Activated CD4-positive, alpha-beta memory T cell treated with anti-CD3 and anti-CD28 coated beads, Interleukin-2, amount 10 ng/mL, durations not matched to agents 7 days and 5 days (primary cell): ENCODE measurements at regions of chr3 and their contacts with region 1.

Region 1: GRCh38 chr3:36868614-36869436 is 76.0 kb downstream of the TRANK1 start:
- DNase-seq: peak; percentile 42
- H3K4me3 Mint-ChIP-seq: no peak overlapping the region
- H3K27ac Mint-ChIP-seq: no peak overlapping the region
- H3K4me1 Mint-ChIP-seq: peaks cover 17% of the 10 kb centered on the region
- H3K27me3 Mint-ChIP-seq: peaks cover 3% of the 10 kb centered on the region

Region 2: DNA sequence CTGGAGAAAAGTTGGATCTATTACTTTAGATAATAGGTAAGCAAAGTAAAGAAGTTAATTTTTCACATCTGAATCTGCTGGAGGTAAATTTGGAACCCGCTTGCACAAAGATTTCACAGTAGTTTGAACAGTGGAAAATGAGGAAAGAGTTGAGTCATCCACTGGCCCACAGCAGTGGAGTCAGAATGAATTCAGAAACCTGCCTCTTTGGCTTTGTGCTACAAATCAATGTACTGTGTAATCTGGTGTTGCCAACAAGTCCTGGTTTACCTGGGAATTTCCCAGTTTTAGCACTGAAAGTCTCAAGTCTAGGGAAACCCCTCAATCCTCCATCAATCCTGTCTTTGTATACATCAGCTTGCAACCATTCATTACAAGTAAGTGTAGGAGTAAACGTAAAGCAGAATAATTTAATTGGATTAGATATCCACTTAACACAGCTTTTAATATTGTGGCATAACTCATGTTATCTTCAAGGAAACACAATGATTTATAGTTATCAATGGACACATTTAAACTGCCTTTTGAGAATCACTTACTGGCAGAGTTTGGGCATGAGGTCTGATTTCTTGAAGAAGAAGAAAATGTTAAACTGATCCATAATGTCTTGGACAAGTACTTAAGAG is 205.0 kb before region 1 on chr3:
- CTCF ChIA-PET with region 1: no interaction called
- POLR2A ChIA-PET with region 1: no interaction called
- DNase-seq: no peak
- H3K4me3 Mint-ChIP-seq: no peak overlapping the region
- H3K27ac Mint-ChIP-seq: no peak overlapping the region
- H3K4me1 Mint-ChIP-seq: no peaks in the 10 kb centered on the region
- H3K27me3 Mint-ChIP-seq: no peaks in the 10 kb centered on the region

Region 3: DNA sequence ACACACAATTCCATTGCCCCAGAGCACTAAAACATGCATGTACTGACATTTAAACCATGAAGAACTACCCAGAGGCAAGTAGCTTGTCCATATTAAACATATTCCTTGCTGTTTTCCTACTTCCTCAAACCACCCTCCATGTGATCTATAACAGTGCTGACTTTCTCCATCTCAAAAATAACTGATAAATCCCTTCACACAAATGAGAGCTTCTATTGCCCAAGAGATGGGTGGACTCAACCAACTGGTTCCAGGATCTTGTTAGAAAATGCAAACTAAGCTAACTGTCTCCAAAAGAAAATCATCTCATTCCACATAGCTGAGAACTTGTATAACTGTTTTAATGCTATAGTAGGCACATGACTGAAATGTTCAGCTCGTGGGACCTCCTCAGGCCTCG is 134.1 kb before region 1 on chr3:
- CTCF ChIA-PET with region 1: interaction called, 11 read pairs
- POLR2A ChIA-PET with region 1: no interaction called
- DNase-seq: no peak
- H3K4me3 Mint-ChIP-seq: no peak overlapping the region
- H3K27ac Mint-ChIP-seq: no peak overlapping the region
- H3K4me1 Mint-ChIP-seq: no peaks in the 10 kb centered on the region
- H3K27me3 Mint-ChIP-seq: no peaks in the 10 kb centered on the region

Region 4: GRCh38 chr3:36792342-36792741 is 76.5 kb before region 1 on chr3:
- CTCF ChIA-PET with region 1: interaction called, 14 read pairs
- POLR2A ChIA-PET with region 1: no interaction called
- DNase-seq: peak; percentile 18
- H3K4me3 Mint-ChIP-seq: no peak overlapping the region
- H3K27ac Mint-ChIP-seq: no peak overlapping the region
- H3K4me1 Mint-ChIP-seq: no peaks in the 10 kb centered on the region
- H3K27me3 Mint-ChIP-seq: peaks cover 21% of the 10 kb centered on the region

Region 5: DNA sequence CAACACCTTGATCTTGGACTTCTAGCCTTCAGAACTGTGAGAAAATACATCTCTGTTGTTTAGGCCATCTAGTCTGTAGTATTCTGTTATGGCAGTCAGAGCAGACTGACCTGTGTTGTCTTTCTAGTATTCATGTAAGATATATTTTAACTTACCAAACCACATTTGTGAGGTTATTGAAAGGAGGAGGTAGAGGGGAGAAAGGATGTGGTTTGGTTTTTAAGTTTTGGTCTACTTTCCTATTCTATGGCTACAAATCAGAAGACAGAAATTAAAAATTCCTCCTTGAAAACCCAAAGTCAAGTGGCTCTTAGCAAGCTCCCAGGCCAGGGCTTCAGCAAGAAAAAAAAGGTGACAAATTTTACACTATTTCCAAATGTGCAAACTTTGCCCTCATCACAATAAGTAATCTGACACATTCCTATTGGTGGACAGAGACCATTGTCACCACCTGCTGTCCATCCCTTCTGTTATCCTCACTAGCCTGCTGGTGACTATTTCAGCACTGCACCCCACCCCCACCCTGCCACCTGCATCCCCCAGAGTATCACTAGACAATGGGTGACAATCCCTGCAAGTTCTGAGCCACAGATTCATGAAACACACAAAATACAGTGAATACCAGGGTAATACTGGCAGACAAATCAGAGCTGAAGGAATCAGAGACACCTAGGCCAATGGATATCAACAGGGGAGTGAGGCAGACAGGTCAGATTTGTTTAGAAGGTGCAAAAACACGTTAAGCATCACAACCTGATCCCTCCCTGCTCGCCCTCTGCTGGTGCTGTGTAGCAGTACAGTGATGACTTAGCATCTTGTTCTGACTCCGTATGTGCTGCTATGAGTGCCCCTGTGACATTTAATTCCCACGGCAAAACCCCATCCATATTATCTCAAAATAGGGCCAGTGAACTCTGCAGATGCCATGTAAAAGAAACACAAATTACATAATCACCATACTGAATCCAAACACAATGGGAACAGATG is 25.5 kb before region 1 on chr3:
- CTCF ChIA-PET with region 1: interaction called, 10 read pairs
- POLR2A ChIA-PET with region 1: no interaction called
- DNase-seq: peak; percentile 70
- H3K4me3 Mint-ChIP-seq: no peak overlapping the region
- H3K27ac Mint-ChIP-seq: no peak overlapping the region
- H3K4me1 Mint-ChIP-seq: peaks cover 27% of the 10 kb centered on the region
- H3K27me3 Mint-ChIP-seq: no peaks in the 10 kb centered on the region